ENCODE measurements at regions of chr2 and their contacts with region 1.

Region 1: DNA sequence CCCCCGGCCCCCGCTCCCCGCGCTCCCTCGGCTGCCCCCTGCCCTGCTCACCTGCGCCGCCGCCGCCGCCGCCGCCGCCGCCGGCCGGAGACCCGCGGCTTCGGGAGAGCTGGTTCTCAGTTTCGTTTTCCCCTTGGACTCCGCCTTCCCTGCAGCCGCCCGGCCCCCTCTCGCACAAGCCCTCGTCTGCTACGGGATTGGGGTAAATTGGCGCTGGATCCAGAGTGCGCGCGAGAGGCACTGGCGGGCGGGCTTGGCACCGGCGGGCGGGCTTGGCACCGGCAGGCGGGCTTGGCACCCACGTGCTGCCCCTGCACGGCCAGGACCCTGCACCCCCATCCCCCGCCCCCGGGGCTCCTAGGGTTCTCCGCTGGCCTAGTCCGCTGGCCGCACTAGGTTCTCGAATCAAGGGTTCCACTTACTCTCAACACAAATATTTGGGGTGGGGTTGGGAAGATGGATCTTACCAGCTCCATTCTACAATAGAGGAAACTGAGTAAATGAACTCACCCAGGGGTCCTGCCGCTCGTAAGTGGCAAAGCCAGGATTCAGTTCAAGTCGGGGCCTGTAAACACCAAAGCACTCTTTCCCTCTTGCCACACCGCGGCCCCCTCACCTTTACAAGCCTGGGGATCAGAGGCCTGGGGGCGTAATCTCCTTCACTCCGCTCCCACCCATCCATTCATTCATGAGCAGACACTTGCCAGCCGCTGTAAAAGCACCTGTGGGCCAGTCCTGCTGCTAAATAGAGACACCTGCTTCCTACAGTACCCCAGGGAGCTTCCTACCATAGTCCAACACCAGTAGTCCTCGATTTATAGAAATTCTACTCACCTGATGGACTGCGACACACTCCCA is at the start of gene EIF2AK2:
- DNase-seq: peak; percentile 93
- ATAC-seq: peak; percentile 92
- total RNA-seq, gene EIF2AK2: 20.7 TPM

Region 2: GRCh38 chr2:36770542-36771287 is 386.4 kb before region 1 on chr2:
- intact Hi-C with region 1: no loop called
- DNase-seq: no peak
- ATAC-seq: peak; percentile 69

Region 3: DNA sequence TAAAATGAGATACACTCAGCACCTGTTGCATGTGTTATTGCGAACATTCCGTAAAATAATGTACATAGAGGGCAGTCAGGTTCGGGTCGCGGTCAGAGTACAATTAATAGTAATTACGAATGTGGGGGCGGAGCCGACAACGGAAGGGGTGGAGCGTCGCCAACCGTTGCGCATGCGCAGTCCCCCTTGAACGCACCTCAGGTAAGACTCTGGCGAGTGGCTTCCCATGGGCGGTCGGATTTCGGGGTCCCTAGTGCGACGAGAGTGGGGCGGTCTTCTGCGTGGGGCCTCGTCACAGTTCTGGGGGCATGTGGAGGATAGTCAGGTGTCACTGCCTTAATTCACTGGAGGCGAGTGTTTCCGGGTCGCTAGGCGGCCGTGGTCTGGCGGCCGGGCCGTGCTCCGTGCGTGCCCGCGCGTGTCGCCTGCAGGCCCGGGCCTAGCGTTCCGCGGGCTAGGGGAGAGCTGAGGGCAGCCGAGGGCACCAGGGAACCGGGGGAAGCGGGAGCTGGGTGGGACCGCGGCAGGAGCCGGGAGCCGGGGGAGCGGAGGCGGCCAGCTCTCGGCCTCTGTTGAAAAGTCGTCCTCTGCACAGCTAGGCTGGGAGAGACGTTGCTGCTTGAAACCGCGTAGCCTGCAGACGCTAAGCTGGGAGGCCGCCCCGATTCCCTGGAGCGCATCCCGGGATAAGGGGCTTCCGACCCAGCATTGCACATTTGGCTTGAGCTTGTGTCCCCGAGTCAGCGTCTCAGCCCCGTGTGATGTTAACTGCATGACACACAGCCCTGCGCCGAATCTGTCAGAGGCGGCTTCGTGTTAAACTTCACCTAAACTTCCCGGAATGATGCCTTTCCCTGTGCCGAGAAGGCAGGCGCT is 39.5 kb after region 1 on chr2 and contains the start of gene CEBPZOS:
- intact Hi-C with region 1: loop called (anchors 2 kb)
- DNase-seq: peak; percentile 92
- ATAC-seq: peak; percentile 91
- total RNA-seq, gene CEBPZOS: 65.0 TPM

Region 4: DNA sequence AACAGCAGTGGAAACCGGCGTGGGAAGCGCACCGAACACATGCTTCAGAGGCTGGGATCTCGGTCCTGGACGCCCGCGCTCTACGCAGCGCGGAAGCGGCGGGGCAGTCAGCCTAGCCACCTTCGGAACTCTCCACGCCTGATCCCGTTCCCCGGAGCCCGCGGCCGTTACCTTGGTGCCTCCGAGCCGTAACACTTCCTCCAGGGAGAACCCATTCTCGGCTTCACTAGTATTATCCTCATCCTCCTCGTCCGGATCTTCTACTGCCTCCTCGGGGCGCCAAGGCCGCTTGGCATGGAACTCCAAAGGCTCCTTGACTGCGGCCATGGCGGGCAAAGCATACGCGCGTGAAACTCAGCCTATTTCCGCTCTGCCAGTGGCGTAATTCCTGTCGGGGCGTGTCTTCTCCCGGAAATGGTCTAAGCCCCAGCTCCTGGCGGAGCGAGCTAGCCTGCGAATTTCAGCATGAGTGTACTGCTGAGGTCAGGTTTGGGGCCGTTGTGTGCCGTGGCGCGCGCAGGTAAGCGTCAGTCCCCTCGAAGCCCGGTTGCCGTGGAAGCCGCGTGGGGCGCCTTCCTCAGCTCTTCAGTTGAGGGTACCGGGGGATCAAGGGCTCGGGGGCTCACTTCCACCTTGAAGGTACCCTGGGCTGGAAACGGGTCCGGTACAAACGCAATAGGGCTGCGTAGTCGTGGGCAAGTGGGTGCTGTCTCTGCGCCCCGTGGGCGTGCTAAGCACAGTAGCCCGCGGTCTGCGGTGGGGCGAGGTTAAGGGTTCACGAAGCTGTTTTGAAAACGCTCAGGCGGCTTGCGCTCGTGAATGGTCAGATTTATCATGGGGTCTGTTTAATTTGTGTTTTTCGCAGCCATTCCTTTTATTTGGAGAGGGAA is 74.4 kb after region 1 on chr2 and contains the starts of genes CEBPZ and NDUFAF7:
- intact Hi-C with region 1: loop called (anchors 2 kb)
- DNase-seq: peak; percentile 95
- ATAC-seq: peak; percentile 96
- total RNA-seq, gene CEBPZ: 32.3 TPM
- total RNA-seq, gene NDUFAF7: 22.8 TPM

Measured in Right ventricle myocardium inferior (tissue), 1 donor.